ENCODE measurements at regions of chr10 and their contacts with region 1.

Region 1: DNA sequence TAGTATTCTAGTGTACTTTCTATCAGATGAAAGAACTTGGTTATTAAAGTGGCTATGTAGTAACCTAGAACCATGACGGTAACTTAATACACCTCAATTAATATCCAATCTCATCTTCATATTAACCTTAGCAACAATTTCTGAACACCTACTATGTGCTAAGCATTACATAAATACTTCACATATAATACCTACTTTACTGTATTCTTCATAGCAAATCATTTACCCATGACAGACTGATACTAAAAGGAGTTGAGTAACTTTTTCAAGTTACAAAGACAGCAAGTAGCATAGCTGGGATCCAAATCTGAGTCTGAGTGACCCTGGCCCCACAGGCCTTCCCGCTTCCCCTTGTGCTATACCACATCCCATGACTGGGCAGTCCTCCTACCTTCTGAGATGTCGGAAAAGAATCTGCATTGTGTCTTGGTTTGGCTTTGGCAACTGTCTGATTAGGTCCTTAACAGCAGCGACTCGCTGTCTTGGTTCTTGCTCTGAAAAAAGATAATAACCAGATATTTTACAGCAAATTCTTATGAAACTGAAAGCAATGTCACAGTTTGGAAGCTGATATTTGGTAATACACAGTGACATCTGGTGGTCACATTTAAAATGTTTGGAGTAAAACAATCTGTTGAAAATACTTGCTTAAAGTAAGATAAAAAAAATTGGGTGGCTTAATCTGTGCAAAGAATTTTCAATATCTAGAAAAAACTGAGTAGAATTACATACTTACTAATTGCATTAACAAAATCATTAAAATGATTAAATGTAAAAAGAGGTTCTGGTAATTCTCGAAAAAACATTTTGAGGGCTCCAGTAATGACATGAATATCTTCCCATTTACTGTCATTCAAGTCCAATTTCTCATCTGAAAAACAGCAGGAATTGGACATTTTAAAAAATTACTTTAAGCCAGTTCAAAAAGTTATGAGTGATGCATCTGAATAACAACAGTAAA is 120.1 kb downstream of the ARHGAP12 start:
- DNase-seq: peak; percentile 56
- H3K4me3 Mint-ChIP-seq: peak overlapping the region; percentile 16
- H3K27ac Mint-ChIP-seq: peak overlapping the region; percentile 54
- H3K4me1 Mint-ChIP-seq: peaks cover 6% of the 10 kb centered on the region
- H3K27me3 Mint-ChIP-seq: no peaks in the 10 kb centered on the region
- CTCF ChIP-seq: peak; percentile 46

Region 2: DNA sequence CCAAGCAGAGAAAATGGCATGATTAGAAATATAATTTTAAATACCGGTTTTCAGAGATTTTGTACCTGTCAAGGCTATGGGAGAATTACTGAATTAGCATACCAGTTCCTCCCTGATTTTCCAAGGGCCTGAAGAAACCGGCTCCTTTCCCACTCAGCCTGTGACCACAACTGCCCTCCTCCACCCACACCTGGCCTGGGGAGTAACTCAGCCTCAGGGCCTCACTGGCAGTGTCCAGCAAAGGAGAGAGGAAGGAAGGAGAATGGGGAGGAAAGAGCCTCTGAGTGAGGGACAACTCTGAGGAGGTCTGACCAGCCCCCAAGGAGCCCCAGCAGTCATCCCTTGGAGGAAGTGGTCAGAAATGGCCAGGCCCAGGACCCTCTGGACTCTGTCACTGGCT is 1081.0 kb before region 1 on chr10:
- CTCF ChIA-PET with region 1: interaction called, 3 read pairs
- POLR2A ChIA-PET with region 1: interaction called, 4 read pairs
- intact Hi-C with region 1: loop called (anchors 2 kb)
- DNase-seq: no peak
- H3K4me3 Mint-ChIP-seq: no peak overlapping the region
- H3K27ac Mint-ChIP-seq: no peak overlapping the region
- H3K4me1 Mint-ChIP-seq: no peaks in the 10 kb centered on the region
- H3K27me3 Mint-ChIP-seq: no peaks in the 10 kb centered on the region
- CTCF ChIP-seq: no peak

Region 3: GRCh38 chr10:30783939-30784500 is 1024.5 kb before region 1 on chr10:
- CTCF ChIA-PET with region 1: no interaction called
- POLR2A ChIA-PET with region 1: no interaction called
- intact Hi-C with region 1: loop called (anchors 1 kb)
- DNase-seq: peak; percentile 54
- H3K4me3 Mint-ChIP-seq: no peak overlapping the region
- H3K27ac Mint-ChIP-seq: no peak overlapping the region
- H3K4me1 Mint-ChIP-seq: peaks cover 24% of the 10 kb centered on the region
- H3K27me3 Mint-ChIP-seq: no peaks in the 10 kb centered on the region
- CTCF ChIP-seq: peak; percentile 73

Region 4: DNA sequence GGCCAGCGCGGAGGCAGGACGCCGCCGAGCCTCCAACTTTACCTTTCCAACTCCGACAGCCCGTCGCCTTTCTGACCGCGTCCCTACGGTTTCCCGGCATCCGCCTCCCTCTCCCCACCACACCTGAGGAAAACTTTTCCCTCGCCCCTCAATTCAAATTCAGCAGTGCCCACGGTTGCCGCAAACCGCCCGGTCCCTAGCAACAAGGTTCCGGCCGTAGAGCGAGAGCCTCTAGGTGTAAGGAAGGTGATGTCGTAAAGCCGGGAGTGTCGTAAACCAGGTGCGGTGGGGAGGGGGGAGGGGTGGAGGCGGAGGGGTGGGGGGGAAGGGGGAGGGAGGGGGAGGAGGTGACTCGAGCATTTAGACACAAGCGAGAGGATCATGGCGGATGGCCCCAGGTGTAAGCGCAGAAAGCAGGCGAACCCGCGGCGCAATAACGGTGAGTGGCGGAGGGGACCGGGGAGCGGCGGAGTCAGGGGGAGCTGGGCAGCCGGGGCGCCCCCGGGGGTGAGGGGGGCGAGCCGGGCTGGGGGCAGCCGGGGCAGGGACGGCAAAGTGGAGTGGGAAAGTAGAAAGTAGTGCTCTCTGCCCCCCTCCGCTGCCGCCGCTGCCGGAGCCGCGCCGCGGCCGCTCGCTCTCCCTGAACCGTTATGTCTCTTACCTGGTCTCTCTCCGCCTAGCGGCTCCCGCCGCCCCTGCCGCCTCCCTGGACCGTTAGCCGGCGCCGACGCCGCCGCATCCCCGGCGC is 489.5 kb before region 1 on chr10 and contains the start of gene ZEB1:
- CTCF ChIA-PET with region 1: no interaction called
- POLR2A ChIA-PET with region 1: no interaction called
- intact Hi-C with region 1: loop called (anchors 1 kb)
- DNase-seq: peak; percentile 91
- H3K4me3 Mint-ChIP-seq: peak within 1 kb of the TSS; percentile 86
- H3K27ac Mint-ChIP-seq: peak within 1 kb of the TSS; percentile 88
- H3K4me1 Mint-ChIP-seq: peaks cover 27% of the 10 kb centered on the region
- H3K27me3 Mint-ChIP-seq: no peaks in the 10 kb centered on the region
- CTCF ChIP-seq: peak; percentile 43
- total RNA-seq, gene ZEB1: 15.1 and 20.6 TPM in 2 replicates

Region 5: GRCh38 chr10:31709028-31709427 is 99.5 kb before region 1 on chr10:
- CTCF ChIA-PET with region 1: interaction called, 3 read pairs
- POLR2A ChIA-PET with region 1: no interaction called
- intact Hi-C with region 1: loop called (anchors 1 kb)
- DNase-seq: no peak
- H3K4me3 Mint-ChIP-seq: no peak overlapping the region
- H3K27ac Mint-ChIP-seq: no peak overlapping the region
- H3K4me1 Mint-ChIP-seq: peaks cover 13% of the 10 kb centered on the region
- H3K27me3 Mint-ChIP-seq: no peaks in the 10 kb centered on the region
- CTCF ChIP-seq: no peak